ENCODE measurements at regions of chr3 and their contacts with region 1.

Region 1: DNA sequence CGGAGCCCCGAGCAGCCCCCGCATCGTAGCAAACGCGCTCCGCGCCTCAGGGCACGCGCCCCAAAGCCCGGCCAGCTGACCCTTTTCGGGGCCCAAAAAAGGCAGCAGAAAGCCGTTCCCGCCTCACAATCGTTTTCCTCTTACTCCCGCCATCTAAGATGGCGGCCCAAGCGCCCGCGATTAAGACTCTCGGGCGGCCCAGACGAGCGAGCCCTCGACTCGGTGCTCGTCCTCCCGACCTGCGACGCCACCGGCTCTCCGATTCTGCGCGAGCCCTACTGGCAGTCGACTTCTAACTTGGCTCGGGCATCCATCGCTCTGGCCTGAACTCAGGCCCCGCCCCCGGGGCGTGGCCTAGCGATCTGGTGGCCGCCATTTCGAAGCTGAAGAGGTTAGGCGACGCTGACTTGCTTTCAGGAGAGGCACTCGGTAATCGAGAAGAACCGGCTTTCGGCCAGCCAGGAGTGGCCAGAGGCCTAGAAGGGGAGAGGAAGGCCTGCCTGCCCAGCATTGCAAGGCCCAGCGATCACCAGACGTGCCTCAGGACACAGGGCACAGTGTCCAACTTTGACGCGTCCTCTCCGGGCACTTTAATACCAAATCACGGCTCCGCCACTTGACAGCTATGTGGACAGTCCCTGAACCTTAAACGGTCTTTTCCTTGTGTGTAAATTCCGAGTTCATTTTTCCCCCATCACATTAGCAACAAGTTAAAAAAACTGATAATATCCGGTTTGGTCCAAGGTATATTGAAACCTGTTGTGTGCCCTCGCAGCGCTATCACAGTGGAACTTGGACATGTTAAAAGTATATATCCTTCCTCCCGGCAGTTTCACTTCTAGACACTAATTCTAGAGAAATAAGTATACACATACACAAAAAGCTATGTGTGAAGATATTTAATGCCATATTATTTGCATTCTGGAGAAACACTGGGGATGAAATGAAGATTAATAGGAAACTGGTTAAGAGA is at the start of gene RAF1:
- DNase-seq: peak; percentile 97
- H3K4me3 Mint-ChIP-seq: peak within 1 kb of the TSS; percentile 86
- H3K27ac Mint-ChIP-seq: peak within 1 kb of the TSS; percentile 99
- H3K4me1 Mint-ChIP-seq: peaks cover 30% of the 10 kb centered on the region
- H3K27me3 Mint-ChIP-seq: no peaks in the 10 kb centered on the region
- total RNA-seq, gene RAF1: 91.0 and 91.6 TPM in 2 replicates

Region 2: GRCh38 chr3:11626084-11626463 is 1038.1 kb before region 1 on chr3:
- intact Hi-C with region 1: loop called (anchors 10 kb)
- DNase-seq: peak; percentile 42
- H3K4me3 Mint-ChIP-seq: peak overlapping the region; percentile 39
- H3K27ac Mint-ChIP-seq: peak overlapping the region; percentile 71
- H3K4me1 Mint-ChIP-seq: peaks cover 69% of the 10 kb centered on the region
- H3K27me3 Mint-ChIP-seq: no peaks in the 10 kb centered on the region

Region 3: DNA sequence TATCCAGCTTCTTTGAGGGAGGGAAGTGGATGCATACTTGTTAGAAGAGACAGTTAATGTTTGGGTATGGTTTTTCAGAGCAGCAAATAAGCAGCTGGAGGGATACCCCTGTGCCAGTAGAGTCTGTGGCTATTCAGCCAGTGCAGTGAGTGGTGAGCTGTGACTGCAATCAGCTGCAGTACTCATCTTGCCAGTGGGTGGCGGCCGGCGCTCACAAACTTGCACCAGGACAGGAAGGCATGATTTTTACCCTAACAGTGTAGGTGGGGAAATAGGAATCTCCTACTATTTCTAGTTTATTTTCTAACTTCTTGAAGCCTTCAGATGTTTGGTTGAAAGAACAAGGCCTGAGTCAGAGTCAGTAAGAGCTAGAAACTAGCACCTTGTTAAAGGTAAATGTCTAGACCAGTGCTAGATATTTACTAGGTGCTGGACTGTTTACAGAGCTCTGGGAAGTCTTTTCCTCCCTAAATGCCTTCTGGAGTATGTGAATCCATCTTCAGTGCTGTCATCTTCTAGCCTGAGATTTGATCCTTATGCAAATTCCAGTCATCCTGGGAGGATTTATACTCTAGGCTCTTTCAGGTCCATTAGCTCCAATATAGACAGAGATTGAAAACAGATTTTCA is 529.1 kb before region 1 on chr3:
- intact Hi-C with region 1: loop called (anchors 5 kb)
- DNase-seq: peak; percentile 45
- H3K4me3 Mint-ChIP-seq: no peak overlapping the region
- H3K27ac Mint-ChIP-seq: no peak overlapping the region
- H3K4me1 Mint-ChIP-seq: no peaks in the 10 kb centered on the region
- H3K27me3 Mint-ChIP-seq: peaks cover 14% of the 10 kb centered on the region

Region 4: GRCh38 chr3:12556671-12557472 is 107.3 kb before region 1 on chr3 and contains the start of gene MKRN2:
- intact Hi-C with region 1: loop called (anchors 1 kb)
- DNase-seq: peak; percentile 79
- H3K4me3 Mint-ChIP-seq: peak within 1 kb of the TSS; percentile 91
- H3K27ac Mint-ChIP-seq: peak within 1 kb of the TSS; percentile 88
- H3K4me1 Mint-ChIP-seq: peaks cover 67% of the 10 kb centered on the region
- H3K27me3 Mint-ChIP-seq: peaks cover 27% of the 10 kb centered on the region
- total RNA-seq, gene MKRN2: 28.5 and 28.6 TPM in 2 replicates

Region 5: GRCh38 chr3:12719984-12720898 is 56.0 kb after region 1 on chr3:
- intact Hi-C with region 1: loop called (anchors 1 kb)
- DNase-seq: peak; percentile 66
- H3K4me3 Mint-ChIP-seq: no peak overlapping the region
- H3K27ac Mint-ChIP-seq: peak overlapping the region; percentile 41
- H3K4me1 Mint-ChIP-seq: peaks cover 9% of the 10 kb centered on the region
- H3K27me3 Mint-ChIP-seq: peaks cover 5% of the 10 kb centered on the region

Region 6: GRCh38 chr3:12994607-12995388 is 330.6 kb after region 1 on chr3:
- intact Hi-C with region 1: loop called (anchors 2 kb)
- DNase-seq: peak; percentile 82
- H3K4me3 Mint-ChIP-seq: peak overlapping the region; percentile 83
- H3K27ac Mint-ChIP-seq: peak overlapping the region; percentile 81
- H3K4me1 Mint-ChIP-seq: peaks cover 30% of the 10 kb centered on the region
- H3K27me3 Mint-ChIP-seq: peaks cover 2% of the 10 kb centered on the region